Activated CD4-positive, alpha-beta T cell treated with anti-CD3 and anti-CD28 coated beads for 36 hours (primary cell): ENCODE measurements at regions of chr9 and their contacts with region 1.

Region 1: GRCh38 chr9:84397151-84397728 is 56.7 kb upstream of the SLC28A3 start:
- DNase-seq: peak; percentile 77
- ATAC-seq: peak; percentile 76
- H3K4me3 Mint-ChIP-seq: no peak overlapping the region
- H3K27ac Mint-ChIP-seq: no peak overlapping the region
- H3K4me1 Mint-ChIP-seq: no peaks in the 10 kb centered on the region
- H3K27me3 Mint-ChIP-seq: peaks cover 1% of the 10 kb centered on the region

Region 2: DNA sequence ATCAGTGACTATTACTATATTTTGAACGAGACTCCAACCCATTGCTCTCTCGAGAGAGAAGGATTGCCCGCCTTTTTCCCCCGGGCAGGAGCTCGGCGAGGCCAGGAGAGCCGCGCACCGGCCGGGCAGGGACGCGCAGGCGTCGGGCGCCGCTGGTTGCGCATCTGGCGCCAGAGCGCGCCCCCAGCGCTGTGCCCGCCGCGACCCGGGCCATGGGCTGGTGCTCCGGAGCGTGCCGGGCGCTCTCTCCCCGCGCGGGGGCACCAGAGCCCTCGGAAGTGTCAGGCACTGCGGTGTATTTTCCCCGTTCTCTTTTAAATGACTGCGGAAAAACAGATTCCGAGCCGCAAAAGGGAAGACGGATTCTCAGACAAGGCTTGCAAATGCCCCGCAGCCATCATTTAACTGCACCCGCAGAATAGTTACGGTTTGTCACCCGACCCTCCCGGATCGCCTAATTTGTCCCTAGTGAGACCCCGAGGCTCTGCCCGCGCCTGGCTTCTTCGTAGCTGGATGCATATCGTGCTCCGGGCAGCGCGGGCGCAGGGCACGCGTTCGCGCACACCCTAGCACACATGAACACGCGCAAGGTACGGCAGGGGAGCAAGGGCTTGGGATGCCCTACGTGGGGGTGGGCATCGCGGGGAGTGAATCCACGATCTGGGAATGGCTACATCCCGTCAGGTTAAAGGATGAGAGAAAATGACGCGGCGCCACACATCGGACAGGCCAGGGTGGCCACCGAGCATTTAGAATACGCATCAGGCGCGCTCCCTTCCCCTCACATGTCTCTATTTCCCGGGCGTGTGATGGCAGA is 271.2 kb after region 1 on chr9:
- CTCF ChIA-PET with region 1: no interaction called
- POLR2A ChIA-PET with region 1: no interaction called
- intact Hi-C with region 1: loop called in 1 of 2 experiments (anchors 2 kb)
- DNase-seq: peak; percentile 81
- ATAC-seq: peak; percentile 91
- H3K4me3 Mint-ChIP-seq: peak overlapping the region; percentile 57
- H3K27ac Mint-ChIP-seq: no peak overlapping the region
- H3K4me1 Mint-ChIP-seq: peaks cover 15% of the 10 kb centered on the region
- H3K27me3 Mint-ChIP-seq: peaks cover 51% of the 10 kb centered on the region

Region 3: DNA sequence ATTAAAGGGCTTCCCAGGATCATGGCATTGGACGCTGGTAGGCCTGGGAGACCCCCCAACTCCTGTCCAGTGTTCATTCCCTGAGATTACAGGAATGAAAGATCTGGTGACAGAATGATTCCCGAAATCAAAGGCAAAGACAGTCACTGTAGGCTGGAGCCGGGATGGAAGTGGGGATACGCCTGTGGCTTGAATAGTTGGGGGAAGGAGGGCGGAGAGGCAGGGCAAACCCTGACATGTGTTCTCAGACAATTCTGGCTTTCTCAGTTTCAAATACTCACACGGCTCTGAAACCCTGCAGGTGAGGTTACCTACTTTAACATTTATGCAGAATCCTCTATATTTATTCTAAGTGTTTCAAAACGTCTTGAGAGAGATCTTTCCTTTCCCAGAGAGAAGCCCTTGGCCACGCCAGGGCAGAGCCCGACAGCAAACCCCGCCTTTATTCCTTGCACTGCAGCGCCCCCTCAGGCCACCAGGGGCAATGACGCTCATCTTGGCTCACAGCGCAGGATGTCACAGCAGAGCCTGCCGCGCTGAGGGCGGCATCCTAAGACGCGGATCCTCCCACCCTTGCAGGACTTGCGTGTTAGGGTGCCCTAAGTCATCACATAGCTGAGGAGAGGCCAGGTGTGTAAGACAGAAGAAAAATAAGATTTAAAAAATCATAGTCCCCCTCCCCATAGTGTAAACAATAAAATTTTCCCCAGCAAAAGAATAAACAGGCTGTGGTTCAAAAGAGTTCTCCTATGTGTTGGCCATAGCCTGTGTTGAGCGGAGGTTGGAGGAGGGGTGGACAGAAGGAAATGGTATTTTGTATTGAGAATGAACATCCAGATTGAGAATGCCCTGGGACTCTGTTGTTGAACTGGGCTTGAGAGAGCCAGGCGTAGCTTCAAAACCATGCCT is 556.8 kb after region 1 on chr9:
- CTCF ChIA-PET with region 1: no interaction called
- POLR2A ChIA-PET with region 1: no interaction called
- intact Hi-C with region 1: loop called in 1 of 2 experiments (anchors 1 kb)
- DNase-seq: peak; percentile 81
- ATAC-seq: peak; percentile 96
- H3K4me3 Mint-ChIP-seq: no peak overlapping the region
- H3K27ac Mint-ChIP-seq: no peak overlapping the region
- H3K4me1 Mint-ChIP-seq: no peaks in the 10 kb centered on the region
- H3K27me3 Mint-ChIP-seq: peaks cover 15% of the 10 kb centered on the region

Region 4: DNA sequence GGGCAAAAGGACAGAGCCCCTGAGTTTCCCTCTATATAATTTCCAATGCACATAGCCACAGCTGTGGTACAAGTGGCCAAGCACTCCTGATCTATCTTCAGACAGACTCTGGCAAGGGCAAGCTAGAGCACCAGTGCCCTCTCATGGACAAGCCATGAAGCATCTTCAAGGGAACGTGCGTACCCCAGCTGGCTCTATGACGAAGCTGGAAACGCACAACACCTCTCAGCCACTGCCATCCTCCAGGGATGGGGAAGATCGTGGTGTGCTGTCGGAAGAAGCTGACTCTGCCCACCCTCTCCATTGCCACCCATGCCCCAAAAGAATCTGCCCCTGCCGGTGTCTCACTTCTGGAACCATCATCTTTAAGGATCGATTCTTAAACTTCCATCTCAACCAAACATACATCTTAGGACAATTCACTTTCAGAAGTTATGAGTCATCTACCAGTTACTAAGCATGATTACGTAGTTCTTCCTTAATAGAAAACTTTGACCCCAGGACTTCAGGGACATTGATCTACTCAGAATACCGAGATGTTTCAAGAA is 861.7 kb after region 1 on chr9:
- CTCF ChIA-PET with region 1: interaction called, 10 read pairs
- POLR2A ChIA-PET with region 1: no interaction called
- intact Hi-C with region 1: loop called in 1 of 2 experiments (anchors 2 kb)
- DNase-seq: peak; percentile 57
- ATAC-seq: peak; percentile 66
- H3K4me3 Mint-ChIP-seq: no peak overlapping the region
- H3K27ac Mint-ChIP-seq: no peak overlapping the region
- H3K4me1 Mint-ChIP-seq: no peaks in the 10 kb centered on the region
- H3K27me3 Mint-ChIP-seq: peaks cover 2% of the 10 kb centered on the region

Region 5: DNA sequence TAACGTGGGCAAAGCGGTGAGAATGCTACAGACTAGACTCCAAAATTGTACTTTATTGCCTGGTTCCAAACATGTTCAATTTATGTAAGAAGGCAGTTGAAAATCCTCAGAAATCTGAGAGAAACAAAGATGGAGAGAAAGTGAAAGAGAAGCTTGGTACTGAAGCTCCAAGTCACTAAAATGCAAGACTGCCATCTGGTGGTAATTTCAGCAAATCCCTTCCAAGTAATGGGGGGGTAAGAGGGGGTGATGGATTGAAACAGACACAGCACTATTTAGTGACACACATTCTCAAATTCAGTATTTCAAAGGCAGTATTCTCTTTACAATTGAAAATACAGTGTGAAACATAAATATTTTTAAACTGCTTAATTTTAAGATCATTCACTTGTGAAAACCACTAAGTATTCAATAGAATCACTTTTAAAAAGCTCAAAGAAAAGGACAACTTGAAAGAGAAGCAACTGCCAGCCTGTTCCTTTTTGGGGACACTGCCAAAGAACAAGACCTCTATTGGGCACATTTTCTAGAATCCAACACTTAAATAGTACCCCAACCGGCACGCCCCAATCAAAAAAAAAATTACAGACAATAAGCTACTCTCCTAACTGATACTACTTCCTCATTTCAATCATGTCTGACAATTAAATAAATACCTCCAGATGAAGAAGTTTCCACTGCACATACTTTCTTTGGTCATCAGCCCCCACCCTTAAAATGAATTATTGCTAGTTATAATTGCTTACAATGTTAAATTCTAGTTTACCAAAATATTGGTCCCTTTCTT is 1213.0 kb after region 1 on chr9:
- CTCF ChIA-PET with region 1: interaction called, 20 read pairs
- POLR2A ChIA-PET with region 1: interaction called, 4 read pairs
- intact Hi-C with region 1: loop called (anchors 2 to 5 kb)
- DNase-seq: no peak
- ATAC-seq: peak; percentile 92
- H3K4me3 Mint-ChIP-seq: peak overlapping the region; percentile 32
- H3K27ac Mint-ChIP-seq: peak overlapping the region; percentile 64
- H3K4me1 Mint-ChIP-seq: peaks cover 8% of the 10 kb centered on the region
- H3K27me3 Mint-ChIP-seq: no peaks in the 10 kb centered on the region